Natural killer cell (primary cell): ENCODE measurements at regions of chr6 and their contacts with region 1.

Region 1: DNA sequence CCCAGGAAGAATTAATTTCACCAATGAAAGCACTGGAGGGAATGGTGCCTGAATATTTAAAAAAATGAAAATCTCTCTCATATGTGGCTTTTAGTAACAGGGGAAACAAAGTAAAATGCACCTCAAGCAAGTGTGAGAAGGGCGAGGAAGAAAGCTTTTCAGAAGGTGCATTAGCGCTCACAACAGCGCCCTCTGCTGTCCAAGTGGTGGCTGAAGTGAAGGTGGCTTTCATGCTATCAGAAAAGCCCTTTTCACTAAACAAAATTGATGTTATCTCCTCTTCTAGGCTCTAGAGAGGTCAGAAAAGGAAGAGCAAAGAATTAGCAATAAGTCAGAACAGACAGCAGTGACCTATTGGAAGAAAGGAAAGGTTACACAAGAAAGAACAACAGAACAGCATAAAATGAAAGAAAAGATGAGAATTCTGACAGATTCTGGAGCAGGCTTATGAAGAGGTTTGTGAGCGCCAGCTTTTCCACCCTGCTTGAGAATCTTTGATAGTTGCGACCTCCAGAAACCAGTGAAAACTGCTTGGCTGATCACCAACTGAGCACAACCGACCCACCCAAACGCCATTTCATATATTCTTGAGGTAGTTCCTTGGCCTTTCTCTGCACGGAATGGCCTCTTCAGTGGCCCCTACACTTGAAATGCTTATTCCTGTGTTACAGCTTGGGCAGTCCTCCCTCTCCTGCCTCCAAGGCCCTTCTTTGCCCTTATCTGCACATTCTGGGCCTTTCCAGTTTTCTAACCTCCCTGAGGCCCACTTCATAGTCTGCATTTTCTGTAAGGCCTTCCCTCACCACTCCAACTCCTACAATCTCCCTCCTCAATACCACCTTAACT is 45.3 kb downstream of the SMLR1 start:
- DNase-seq: peak; percentile 55 to 84
- ATAC-seq: peak; percentile 57 to 65 (median 64)
- H3K4me3 ChIP-seq: no peak overlapping the region
- H3K4me3 Mint-ChIP-seq: no peak overlapping the region
- H3K27ac ChIP-seq: no peak overlapping the region
- H3K27ac Mint-ChIP-seq: no peak overlapping the region
- H3K4me1 ChIP-seq: no peaks in the 10 kb centered on the region
- H3K4me1 Mint-ChIP-seq: peaks cover 0 to 5% of the 10 kb centered on the region in 2 donors
- H3K27me3 ChIP-seq: no peaks in the 10 kb centered on the region
- H3K27me3 Mint-ChIP-seq: peaks cover 0 to 13% of the 10 kb centered on the region in 2 donors
- CTCF ChIP-seq: peak; percentile 90

Region 2: GRCh38 chr6:130293800-130294199 is 578.7 kb before region 1 on chr6:
- intact Hi-C with region 1: loop called (anchors 1 kb)
- DNase-seq: peak in 1 of 2 donors; percentile 67
- ATAC-seq: peak; percentile 46 to 77 (median 69)
- H3K4me3 ChIP-seq: no peak overlapping the region
- H3K4me3 Mint-ChIP-seq: no peak overlapping the region
- H3K27ac ChIP-seq: no peak overlapping the region
- H3K27ac Mint-ChIP-seq: no peak overlapping the region
- H3K4me1 ChIP-seq: no peaks in the 10 kb centered on the region
- H3K4me1 Mint-ChIP-seq: no peaks in the 10 kb centered on the region
- H3K27me3 ChIP-seq: no peaks in the 10 kb centered on the region
- H3K27me3 Mint-ChIP-seq: peaks cover 9 to 17% of the 10 kb centered on the region in 2 donors
- CTCF ChIP-seq: peak; percentile 52

Region 3: GRCh38 chr6:130322673-130323268 is 549.7 kb before region 1 on chr6:
- intact Hi-C with region 1: loop called (anchors 1 kb)
- DNase-seq: peak; percentile 21 to 86
- ATAC-seq: peak in 2 of 3 donors; percentile 62 to 71
- H3K4me3 ChIP-seq: no peak overlapping the region
- H3K4me3 Mint-ChIP-seq: no peak overlapping the region
- H3K27ac ChIP-seq: no peak overlapping the region
- H3K27ac Mint-ChIP-seq: no peak overlapping the region
- H3K4me1 ChIP-seq: no peaks in the 10 kb centered on the region
- H3K4me1 Mint-ChIP-seq: no peaks in the 10 kb centered on the region
- H3K27me3 ChIP-seq: no peaks in the 10 kb centered on the region
- H3K27me3 Mint-ChIP-seq: peaks cover 5 to 8% of the 10 kb centered on the region in 2 donors
- CTCF ChIP-seq: peak; percentile 86

Region 4: DNA sequence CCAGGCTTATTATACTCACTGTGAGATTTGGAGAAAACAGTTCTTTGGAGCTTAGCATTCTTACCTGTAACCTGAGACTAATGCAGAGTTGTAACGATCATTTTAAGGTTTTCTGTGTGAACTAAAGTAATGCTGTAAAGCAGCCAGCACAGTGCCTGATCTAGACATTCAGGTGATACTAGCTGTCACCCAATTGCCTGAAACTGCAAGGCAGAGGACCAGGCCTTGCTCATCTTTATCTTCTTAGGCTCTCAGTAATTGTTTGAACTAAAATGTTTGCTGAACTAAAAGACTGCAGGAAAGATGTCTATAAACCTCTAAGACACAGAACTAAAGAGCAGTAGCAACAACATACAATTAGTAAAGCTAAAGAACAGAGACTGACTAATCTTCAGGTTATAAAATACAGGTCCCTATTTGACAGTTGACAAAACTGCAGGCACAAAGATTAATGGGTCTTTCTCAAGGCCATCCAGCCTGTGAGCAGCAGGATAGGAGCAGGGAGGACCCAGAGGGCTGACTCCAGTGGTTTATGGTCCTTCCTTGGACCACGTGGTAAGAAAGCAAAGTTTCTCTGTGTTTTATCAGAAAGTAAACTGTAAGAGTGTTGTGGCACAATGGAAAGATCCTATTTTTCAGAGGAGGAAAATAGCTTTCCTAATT is 13.8 kb before region 1 on chr6:
- intact Hi-C with region 1: no loop called
- DNase-seq: no peak
- ATAC-seq: no peak
- H3K4me3 ChIP-seq: no peak overlapping the region
- H3K4me3 Mint-ChIP-seq: no peak overlapping the region
- H3K27ac ChIP-seq: no peak overlapping the region
- H3K27ac Mint-ChIP-seq: no peak overlapping the region
- H3K4me1 ChIP-seq: no peaks in the 10 kb centered on the region
- H3K4me1 Mint-ChIP-seq: no peaks in the 10 kb centered on the region
- H3K27me3 ChIP-seq: no peaks in the 10 kb centered on the region
- H3K27me3 Mint-ChIP-seq: peaks cover 0 to 3% of the 10 kb centered on the region in 2 donors
- CTCF ChIP-seq: no peak